ENCODE measurements at regions of chr13 and their contacts with region 1.

Region 1: GRCh38 chr13:110455941-110456340 is 105.6 kb downstream of the RAB20 start:
- DNase-seq: peak; percentile 89 to 93
- H3K4me3 ChIP-seq: peak overlapping the region; percentile 21; the same call in 1 of the 2 replicates
- H3K4me3 Mint-ChIP-seq: peak overlapping the region; percentile 34
- H3K27ac Mint-ChIP-seq: peak overlapping the region; percentile 67
- H3K4me1 ChIP-seq: peaks cover 23% of the 10 kb centered on the region
- H3K4me1 Mint-ChIP-seq: peaks cover 33% of the 10 kb centered on the region
- H3K27me3 ChIP-seq: no peaks in the 10 kb centered on the region
- H3K27me3 Mint-ChIP-seq: no peaks in the 10 kb centered on the region
- CTCF ChIP-seq: peak; percentile 90 to 96

Region 2: DNA sequence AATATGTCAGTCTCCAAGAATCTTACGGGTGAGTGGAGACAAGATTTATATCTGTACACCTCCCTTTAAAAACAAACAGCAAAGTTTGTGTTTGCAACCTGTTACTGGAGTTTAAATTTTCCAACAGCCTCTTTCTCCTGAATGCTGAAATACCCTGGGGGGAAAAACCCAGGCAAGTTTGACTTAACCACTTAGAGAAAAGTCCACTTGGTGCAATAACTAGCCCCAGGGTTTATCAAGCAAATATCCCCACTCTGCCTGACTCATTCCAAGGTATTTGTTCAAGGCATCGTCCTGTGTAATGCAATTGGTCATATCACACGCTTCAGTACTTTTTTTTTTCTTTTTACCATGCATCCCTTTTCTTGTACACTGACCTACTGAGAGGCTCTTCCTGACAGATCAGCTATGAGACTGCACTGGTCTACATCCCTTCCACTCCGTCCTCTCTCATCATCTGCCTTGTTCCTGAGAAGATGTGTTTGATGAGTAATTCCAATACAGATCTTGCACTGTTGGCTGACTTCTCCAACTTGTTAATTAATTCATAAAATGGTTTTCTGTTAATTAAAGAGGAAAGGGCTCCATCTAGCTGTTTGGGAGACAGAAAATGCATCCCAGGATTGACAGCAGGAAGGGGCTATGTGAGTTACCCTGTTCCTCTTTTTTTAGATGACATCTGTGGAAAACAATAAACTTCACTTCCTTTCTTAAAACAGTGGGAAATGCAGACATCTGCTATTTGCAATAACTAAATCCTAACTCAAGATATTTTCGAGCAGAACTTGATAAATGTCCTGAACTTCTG is 457.0 kb before region 1 on chr13:
- CTCF ChIA-PET with region 1: no interaction called
- POLR2A ChIA-PET with region 1: no interaction called
- intact Hi-C with region 1: no loop called
- DNase-seq: peak; percentile 72 to 78
- H3K4me3 ChIP-seq: no peak overlapping the region
- H3K4me3 Mint-ChIP-seq: peak overlapping the region; percentile 22
- H3K27ac Mint-ChIP-seq: peak overlapping the region; percentile 32
- H3K4me1 ChIP-seq: peaks cover 42% of the 10 kb centered on the region
- H3K4me1 Mint-ChIP-seq: peaks cover 43% of the 10 kb centered on the region
- H3K27me3 ChIP-seq: no peaks in the 10 kb centered on the region
- H3K27me3 Mint-ChIP-seq: no peaks in the 10 kb centered on the region
- CTCF ChIP-seq: no peak

Region 3: DNA sequence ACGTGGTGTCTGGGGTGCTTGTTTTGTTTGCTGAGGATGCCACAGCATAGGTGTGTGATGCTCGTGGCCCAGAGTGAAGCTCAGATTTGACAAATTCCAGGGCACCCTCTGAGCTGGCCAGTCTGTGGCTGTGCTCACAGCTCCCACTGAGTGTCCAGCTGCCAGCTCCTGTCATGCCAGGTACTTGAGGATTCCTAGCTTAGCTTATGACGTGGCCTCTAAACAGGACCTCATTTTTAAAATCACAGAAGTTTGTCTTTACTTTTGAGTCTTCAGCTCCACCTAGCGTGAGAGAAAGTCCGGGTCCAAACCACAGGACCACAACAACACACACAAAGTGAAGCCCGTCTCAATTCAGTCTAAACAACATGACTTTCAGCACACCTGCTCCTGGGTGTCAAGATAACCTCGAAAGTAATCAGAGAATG is 11.7 kb before region 1 on chr13:
- CTCF ChIA-PET with region 1: interaction called, 11 read pairs
- POLR2A ChIA-PET with region 1: no interaction called
- intact Hi-C with region 1: no loop called
- DNase-seq: no peak
- H3K4me3 ChIP-seq: no peak overlapping the region
- H3K4me3 Mint-ChIP-seq: no peak overlapping the region
- H3K27ac Mint-ChIP-seq: peak overlapping the region; percentile 17
- H3K4me1 ChIP-seq: peaks cover 67% of the 10 kb centered on the region
- H3K4me1 Mint-ChIP-seq: peaks cover 35% of the 10 kb centered on the region
- H3K27me3 ChIP-seq: no peaks in the 10 kb centered on the region
- H3K27me3 Mint-ChIP-seq: no peaks in the 10 kb centered on the region
- CTCF ChIP-seq: peak; percentile 16 to 18

Region 4: GRCh38 chr13:110525328-110526319 is 69.7 kb after region 1 on chr13:
- CTCF ChIA-PET with region 1: interaction called, 33 read pairs
- POLR2A ChIA-PET with region 1: no interaction called
- intact Hi-C with region 1: loop called (anchors 2 kb)
- DNase-seq: no peak
- H3K4me3 ChIP-seq: no peak overlapping the region
- H3K4me3 Mint-ChIP-seq: no peak overlapping the region
- H3K27ac Mint-ChIP-seq: peak overlapping the region; percentile 84
- H3K4me1 ChIP-seq: peaks cover 41% of the 10 kb centered on the region
- H3K4me1 Mint-ChIP-seq: peaks cover 38% of the 10 kb centered on the region
- H3K27me3 ChIP-seq: no peaks in the 10 kb centered on the region
- H3K27me3 Mint-ChIP-seq: no peaks in the 10 kb centered on the region
- CTCF ChIP-seq: no peak

Region 5: GRCh38 chr13:110575322-110576069 is 119.6 kb after region 1 on chr13:
- CTCF ChIA-PET with region 1: interaction called, 11 read pairs
- POLR2A ChIA-PET with region 1: no interaction called
- intact Hi-C with region 1: loop called (anchors 1 kb)
- DNase-seq: peak; percentile 47 to 59
- H3K4me3 ChIP-seq: no peak overlapping the region
- H3K4me3 Mint-ChIP-seq: no peak overlapping the region
- H3K27ac Mint-ChIP-seq: no peak overlapping the region
- H3K4me1 ChIP-seq: peaks cover 18% of the 10 kb centered on the region
- H3K4me1 Mint-ChIP-seq: peaks cover 21% of the 10 kb centered on the region
- H3K27me3 ChIP-seq: no peaks in the 10 kb centered on the region
- H3K27me3 Mint-ChIP-seq: no peaks in the 10 kb centered on the region
- CTCF ChIP-seq: peak in 1 of 2 experiments; percentile 37

Region 6: DNA sequence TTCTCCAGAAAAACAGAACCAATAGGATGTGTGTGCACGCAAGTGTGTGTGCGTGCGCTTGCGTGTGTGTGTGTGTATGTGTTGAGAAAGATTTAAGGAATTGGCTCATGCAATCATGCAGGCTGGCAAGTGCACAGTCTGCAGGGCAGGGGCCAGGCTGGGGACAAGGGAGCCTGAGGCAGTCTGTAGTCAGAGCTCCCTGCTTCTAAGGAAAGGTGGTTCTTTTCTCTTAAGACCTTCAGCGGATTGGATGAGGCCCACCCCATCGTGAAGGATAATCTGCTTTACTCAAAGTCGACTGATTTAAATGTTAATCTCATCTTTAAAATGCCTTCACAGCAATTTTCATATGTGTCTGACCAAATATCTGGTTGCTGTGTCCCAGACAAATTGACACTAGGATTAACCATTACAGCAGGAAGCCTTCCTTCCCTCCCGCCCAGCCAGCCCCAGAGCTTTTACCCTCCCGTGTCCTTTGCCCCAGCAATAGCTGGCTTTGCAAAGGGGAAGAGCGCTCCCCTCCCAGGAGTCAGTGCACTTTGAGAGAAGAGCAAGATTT is 144.4 kb after region 1 on chr13:
- CTCF ChIA-PET with region 1: interaction called, 10 read pairs
- POLR2A ChIA-PET with region 1: no interaction called
- intact Hi-C with region 1: no loop called
- DNase-seq: peak; percentile 76 to 79
- H3K4me3 ChIP-seq: no peak overlapping the region
- H3K4me3 Mint-ChIP-seq: peak overlapping the region; percentile 61
- H3K27ac Mint-ChIP-seq: peak overlapping the region; percentile 52
- H3K4me1 ChIP-seq: peaks cover 40% of the 10 kb centered on the region
- H3K4me1 Mint-ChIP-seq: peaks cover 36% of the 10 kb centered on the region
- H3K27me3 ChIP-seq: no peaks in the 10 kb centered on the region
- H3K27me3 Mint-ChIP-seq: no peaks in the 10 kb centered on the region
- CTCF ChIP-seq: no peak

Region 7: GRCh38 chr13:110819203-110820014 is 363.5 kb after region 1 on chr13:
- CTCF ChIA-PET with region 1: no interaction called
- POLR2A ChIA-PET with region 1: no interaction called
- intact Hi-C with region 1: loop called (anchors 5 kb)
- DNase-seq: peak; percentile 72 to 85
- H3K4me3 ChIP-seq: no peak overlapping the region
- H3K4me3 Mint-ChIP-seq: no peak overlapping the region
- H3K27ac Mint-ChIP-seq: no peak overlapping the region
- H3K4me1 ChIP-seq: 0 out of 2 replicates have a peak, but pooled peaks cover 4% of the 10 kb centered on the region
- H3K4me1 Mint-ChIP-seq: no peaks in the 10 kb centered on the region
- H3K27me3 ChIP-seq: no peaks in the 10 kb centered on the region
- H3K27me3 Mint-ChIP-seq: no peaks in the 10 kb centered on the region
- CTCF ChIP-seq: peak; percentile 95 to 96

Measured in Caco-2 (cell line).